Ovary (tissue), 10 donors: ENCODE measurements at regions of chr7 and their contacts with region 1.

Region 1: GRCh38 chr7:140810830-140811556 is 113.7 kb downstream of the BRAF start:
- DNase-seq: peak in 4 of 5 donors; percentile 21 to 50 (median 36)
- H3K4me3 ChIP-seq: no peak overlapping the region
- H3K27ac ChIP-seq: no peak overlapping the region
- H3K4me1 ChIP-seq: no peaks in the 10 kb centered on the region
- H3K27me3 ChIP-seq: no peaks in the 10 kb centered on the region
- CTCF ChIP-seq: peak; percentile 24 to 57 (median 45)
- EP300 ChIP-seq: no peak
- POLR2A ChIP-seq: no peak

Region 2: DNA sequence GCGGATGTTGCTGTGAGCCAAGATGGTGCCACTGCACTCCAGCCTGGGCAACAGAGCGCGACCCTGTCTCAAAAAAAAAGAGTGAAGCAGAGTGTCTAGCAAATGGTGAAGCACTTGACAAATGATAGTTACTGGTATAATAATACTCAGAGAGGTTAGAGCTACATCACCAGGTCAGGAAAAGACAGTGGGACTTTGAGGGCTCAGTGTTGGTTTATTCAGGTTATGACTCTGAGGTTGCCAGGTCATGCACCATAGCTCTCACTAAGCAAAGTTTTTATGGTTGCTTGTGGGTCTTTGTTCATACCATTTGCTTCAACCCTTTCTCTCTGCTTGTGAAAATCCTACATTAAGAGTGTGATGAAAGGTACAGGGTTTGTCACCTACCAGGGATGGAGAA is 190.1 kb after region 1 on chr7:
- intact Hi-C with region 1: loop called in 1 of 4 experiments (anchors 10 kb)
- DNase-seq: no peak
- H3K4me3 ChIP-seq: no peak overlapping the region
- H3K27ac ChIP-seq: no peak overlapping the region
- H3K4me1 ChIP-seq: no peaks in the 10 kb centered on the region
- H3K27me3 ChIP-seq: no peaks in the 10 kb centered on the region
- CTCF ChIP-seq: no peak
- EP300 ChIP-seq: no peak
- POLR2A ChIP-seq: no peak